Cardiac septum (tissue), 1 donor: ENCODE measurements at regions of chr9 and their contacts with region 1.

Region 1: GRCh38 chr9:131277910-131278701 is 1.8 kb upstream of the FAM78A start:
- DNase-seq: peak; percentile 92

Region 2: GRCh38 chr9:130215341-130216119 is 1062.6 kb before region 1 on chr9:
- intact Hi-C with region 1: no loop called
- DNase-seq: no peak

Region 3: GRCh38 chr9:130770679-130771442 is 507.2 kb before region 1 on chr9:
- intact Hi-C with region 1: no loop called
- DNase-seq: no peak

Region 4: DNA sequence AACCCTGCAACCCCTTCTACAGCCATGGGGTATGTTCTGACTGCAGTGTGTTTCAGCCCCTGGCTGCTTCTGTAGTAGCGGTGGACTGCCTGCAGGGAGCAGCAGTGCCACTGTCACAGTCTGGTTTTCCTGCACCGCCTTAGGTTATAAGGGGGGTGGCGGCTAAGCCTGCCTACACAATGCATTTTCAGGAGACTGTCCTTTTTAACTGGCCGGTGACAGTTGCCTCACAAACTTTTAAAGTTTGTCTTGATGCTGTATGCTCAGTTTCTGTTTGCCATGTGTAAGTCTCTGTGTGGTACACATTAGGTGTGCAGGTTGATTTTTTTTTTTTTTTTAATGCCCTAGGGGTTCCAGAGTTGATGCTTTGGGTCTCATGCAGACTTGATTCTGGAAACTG is 99.7 kb before region 1 on chr9:
- intact Hi-C with region 1: loop called (anchors 5 kb)
- DNase-seq: peak; percentile 87

Region 5: GRCh38 chr9:131237931-131238401 is 40.1 kb before region 1 on chr9:
- intact Hi-C with region 1: loop called (anchors 2 kb)
- DNase-seq: peak; percentile 84

Region 6: GRCh38 chr9:131393622-131394463 is 115.7 kb after region 1 on chr9 and contains the start of gene PRRC2B:
- intact Hi-C with region 1: loop called (anchors 10 kb)
- DNase-seq: peak; percentile 95
- total RNA-seq, gene PRRC2B: 151 TPM